AG04449 (cell line): ENCODE measurements at regions of chr5 and their contacts with region 1.

Region 1: GRCh38 chr5:149387081-149387631 is 8.1 kb upstream of the IL17B start:
- DNase-seq: no peak
- H3K4me3 ChIP-seq: no peak overlapping the region
- CTCF ChIP-seq: no peak

Region 2: DNA sequence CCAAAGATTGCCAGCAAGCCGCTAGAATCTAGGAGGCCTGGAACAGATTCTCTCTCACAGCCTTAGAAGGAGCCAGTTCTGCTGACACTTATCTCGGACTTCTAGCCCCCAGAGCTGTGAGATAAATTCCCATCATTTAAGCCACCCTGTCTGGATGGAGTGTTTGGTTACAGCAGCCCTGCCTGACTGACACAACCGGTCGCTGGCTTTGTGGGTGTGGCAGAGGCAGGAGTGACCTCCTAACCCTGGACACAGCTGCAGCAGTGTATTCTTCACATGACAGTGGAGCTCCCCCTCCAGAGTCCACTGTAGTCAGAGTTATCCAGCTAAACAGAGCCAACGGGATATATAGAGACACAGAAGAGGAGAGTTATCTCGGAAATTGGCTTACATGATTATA is 13.1 kb after region 1 on chr5:
- CTCF ChIA-PET with region 1: interaction called, 737 read pairs
- POLR2A ChIA-PET with region 1: interaction called, 15 read pairs
- DNase-seq: no peak
- H3K4me3 ChIP-seq: no peak overlapping the region
- CTCF ChIP-seq: no peak

Region 3: DNA sequence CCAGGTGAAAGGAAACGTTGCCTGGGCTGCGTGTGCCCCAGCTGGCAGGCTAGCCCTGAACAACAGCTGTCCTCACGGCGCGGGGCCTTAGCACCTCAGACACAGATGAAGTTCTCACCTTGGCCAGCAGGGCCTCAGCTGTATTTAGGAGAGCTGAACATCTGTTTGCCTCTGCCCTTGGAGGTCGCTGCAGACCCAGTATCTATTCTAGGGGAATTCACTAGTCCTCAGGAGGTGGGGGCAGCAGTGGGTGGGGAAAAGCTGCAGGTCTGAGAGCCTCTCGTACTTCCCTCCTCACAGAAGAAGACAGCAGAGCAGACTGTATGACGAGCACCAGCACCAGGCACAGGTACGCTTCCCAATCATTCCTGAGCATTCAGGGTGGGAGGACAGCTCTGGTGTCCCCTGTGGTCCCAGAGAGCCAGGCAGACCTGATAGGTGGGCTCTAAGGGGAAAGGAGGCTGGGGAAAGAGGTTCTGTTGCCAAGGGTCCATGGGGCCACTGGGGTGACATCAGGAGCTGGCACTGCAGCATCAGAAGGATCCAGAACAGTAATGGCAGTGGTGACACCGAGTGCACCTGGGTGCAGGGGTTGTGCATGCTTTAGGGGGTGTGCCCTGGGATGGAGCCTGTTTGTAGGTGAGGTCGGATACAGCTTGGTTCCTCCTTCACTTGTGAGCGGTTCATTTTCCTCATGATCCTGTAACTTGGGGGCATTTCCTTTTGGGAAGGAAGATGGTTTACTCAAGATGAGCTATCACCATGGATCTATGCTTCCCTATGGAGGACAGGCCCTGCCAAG is 1011.8 kb after region 1 on chr5:
- CTCF ChIA-PET with region 1: no interaction called
- POLR2A ChIA-PET with region 1: no interaction called
- DNase-seq: no peak
- H3K4me3 ChIP-seq: no peak overlapping the region
- CTCF ChIP-seq: peak; percentile 7